GM10248 (cell line): ENCODE measurements at regions of chr19 and their contacts with region 1.

Region 1: GRCh38 chr19:8641908-8642547 is 11.6 kb downstream of the NFILZ start:
- DNase-seq: peak; percentile 35
- CTCF ChIP-seq: peak; percentile 41

Region 2: DNA sequence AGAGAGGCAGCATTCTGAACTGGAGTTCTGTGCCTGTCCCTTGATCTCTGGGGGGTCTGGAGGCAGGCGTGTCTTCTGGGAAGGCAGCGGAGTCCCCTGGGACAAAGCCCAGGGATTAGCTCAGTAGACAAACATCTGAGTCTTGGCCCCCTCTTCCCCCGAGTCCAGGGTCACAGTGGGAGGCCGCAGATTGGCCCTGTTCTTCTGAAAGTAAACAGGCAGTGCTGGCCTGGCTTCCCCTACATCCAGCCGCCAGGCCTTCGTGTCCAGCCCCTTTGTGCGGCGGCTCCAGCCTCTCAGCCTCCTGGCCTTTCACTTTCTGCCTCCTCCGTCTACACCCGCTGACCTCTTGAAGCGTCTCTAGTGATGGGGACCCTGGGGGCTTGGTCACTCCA is 10.6 kb before region 1 on chr19:
- CTCF ChIA-PET with region 1: no interaction called
- POLR2A ChIA-PET with region 1: no interaction called
- DNase-seq: no peak
- CTCF ChIP-seq: no peak

Region 3: DNA sequence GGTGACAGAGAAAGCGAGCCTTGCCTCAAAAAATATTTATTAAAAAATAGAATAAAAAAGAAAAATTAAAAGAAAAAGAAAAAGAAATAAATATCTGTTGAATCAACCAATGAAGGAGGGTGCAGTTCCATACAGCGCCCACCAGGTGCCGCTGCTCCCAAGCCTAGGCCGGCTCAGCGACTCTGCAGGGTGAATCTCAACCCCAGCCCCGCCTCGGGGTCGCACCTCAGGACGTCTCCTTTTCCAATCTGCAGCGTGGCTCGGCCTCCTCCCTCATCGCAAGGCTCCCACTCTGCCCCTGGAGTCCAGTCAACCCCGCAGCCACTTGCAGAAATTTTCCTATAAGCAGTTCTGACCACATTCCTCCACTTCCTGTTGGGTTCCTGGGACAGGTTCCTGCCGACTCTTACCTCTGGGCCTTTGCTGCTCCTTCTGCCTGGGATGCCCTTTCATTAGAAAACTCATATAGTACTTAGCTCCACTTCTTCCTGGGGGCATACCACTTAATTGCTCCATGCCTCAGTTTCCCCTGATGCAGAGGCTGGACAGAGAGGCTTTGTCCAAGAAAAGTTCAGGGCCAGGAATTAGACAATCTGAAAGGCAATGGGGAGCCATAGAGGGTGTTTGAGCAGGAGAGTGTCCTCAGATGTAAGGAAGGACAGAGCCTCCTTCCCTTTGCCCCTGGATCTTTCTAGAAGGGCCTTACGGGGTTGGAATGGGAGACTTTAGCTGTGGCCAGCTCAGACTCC is 12.7 kb after region 1 on chr19:
- CTCF ChIA-PET with region 1: interaction called, 17 read pairs
- POLR2A ChIA-PET with region 1: no interaction called
- DNase-seq: peak; percentile 79
- CTCF ChIP-seq: peak; percentile 94